ENCODE measurements at regions of chr6 and their contacts with region 1.

Region 1: DNA sequence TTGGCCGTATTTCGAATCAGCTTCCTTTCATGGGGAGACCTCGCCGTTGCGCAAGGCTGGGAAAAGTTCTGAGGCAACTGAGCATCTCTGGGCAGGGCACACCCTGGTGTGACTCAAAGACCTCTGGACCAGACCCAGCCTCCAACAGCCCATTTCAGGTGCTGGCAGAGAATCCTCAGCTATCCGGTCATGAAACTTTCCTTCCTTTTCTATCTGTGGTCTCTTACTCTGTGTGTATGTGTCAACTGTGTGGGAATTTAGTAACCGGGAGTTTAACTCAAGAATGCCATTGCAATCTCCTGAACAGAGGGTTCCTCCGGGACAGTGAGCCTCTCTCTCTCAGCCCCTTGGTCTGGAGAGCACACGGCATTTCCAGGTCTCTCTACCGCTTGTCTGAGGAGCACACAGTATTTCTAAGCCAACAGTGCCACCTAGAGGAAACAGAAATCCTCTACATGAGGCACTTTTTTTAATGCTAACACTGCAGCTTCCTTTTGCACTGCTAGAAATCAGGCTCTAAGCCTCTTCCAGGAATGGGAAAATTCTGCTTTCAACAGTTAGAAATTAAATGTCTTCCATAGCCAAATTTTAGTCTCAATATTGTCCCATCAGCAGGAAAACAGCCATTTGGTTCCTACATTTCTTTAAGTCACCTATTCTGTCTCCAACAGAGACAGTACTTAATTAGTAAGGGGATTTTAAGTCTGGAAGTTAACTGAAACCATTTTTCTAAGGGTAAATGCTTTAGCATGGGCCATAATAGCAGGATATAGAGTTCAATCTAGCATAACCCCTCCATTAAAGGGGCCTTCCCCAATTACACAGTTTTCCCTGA is 32.7 kb downstream of the PLN start:
- DNase-seq: peak; percentile 80
- H3K4me3 ChIP-seq: no peak overlapping the region
- H3K27ac ChIP-seq: no peak overlapping the region
- H3K4me1 ChIP-seq: no peaks in the 10 kb centered on the region
- H3K27me3 ChIP-seq: no peaks in the 10 kb centered on the region
- CTCF ChIP-seq: peak; percentile 75

Region 2: GRCh38 chr6:117976030-117976651 is 604.7 kb before region 1 on chr6:
- CTCF ChIA-PET with region 1: interaction called, 5 read pairs
- POLR2A ChIA-PET with region 1: no interaction called
- intact Hi-C with region 1: loop called (anchors 10 kb)
- DNase-seq: peak; percentile 73
- H3K4me3 ChIP-seq: no peak overlapping the region
- H3K27ac ChIP-seq: no peak overlapping the region
- H3K4me1 ChIP-seq: peaks cover 8% of the 10 kb centered on the region
- H3K27me3 ChIP-seq: peaks cover 2% of the 10 kb centered on the region
- CTCF ChIP-seq: peak; percentile 83

Region 3: GRCh38 chr6:118618679-118619377 is 38.0 kb after region 1 on chr6:
- CTCF ChIA-PET with region 1: no interaction called
- POLR2A ChIA-PET with region 1: no interaction called
- intact Hi-C with region 1: loop called (anchors 1 kb)
- DNase-seq: peak; percentile 63
- H3K4me3 ChIP-seq: no peak overlapping the region
- H3K27ac ChIP-seq: no peak overlapping the region
- H3K4me1 ChIP-seq: no peaks in the 10 kb centered on the region
- H3K27me3 ChIP-seq: no peaks in the 10 kb centered on the region
- CTCF ChIP-seq: peak; percentile 88

Region 4: GRCh38 chr6:118768904-118769325 is 188.1 kb after region 1 on chr6:
- CTCF ChIA-PET with region 1: no interaction called
- POLR2A ChIA-PET with region 1: no interaction called
- intact Hi-C with region 1: no loop called
- DNase-seq: no peak
- H3K4me3 ChIP-seq: no peak overlapping the region
- H3K27ac ChIP-seq: no peak overlapping the region
- H3K4me1 ChIP-seq: no peaks in the 10 kb centered on the region
- H3K27me3 ChIP-seq: no peaks in the 10 kb centered on the region
- CTCF ChIP-seq: no peak